Activated CD4-positive, alpha-beta T cell treated with anti-CD3 and anti-CD28 coated beads for 36 hours (primary cell): ENCODE measurements at regions of chr14 and their contacts with region 1.

Region 1: DNA sequence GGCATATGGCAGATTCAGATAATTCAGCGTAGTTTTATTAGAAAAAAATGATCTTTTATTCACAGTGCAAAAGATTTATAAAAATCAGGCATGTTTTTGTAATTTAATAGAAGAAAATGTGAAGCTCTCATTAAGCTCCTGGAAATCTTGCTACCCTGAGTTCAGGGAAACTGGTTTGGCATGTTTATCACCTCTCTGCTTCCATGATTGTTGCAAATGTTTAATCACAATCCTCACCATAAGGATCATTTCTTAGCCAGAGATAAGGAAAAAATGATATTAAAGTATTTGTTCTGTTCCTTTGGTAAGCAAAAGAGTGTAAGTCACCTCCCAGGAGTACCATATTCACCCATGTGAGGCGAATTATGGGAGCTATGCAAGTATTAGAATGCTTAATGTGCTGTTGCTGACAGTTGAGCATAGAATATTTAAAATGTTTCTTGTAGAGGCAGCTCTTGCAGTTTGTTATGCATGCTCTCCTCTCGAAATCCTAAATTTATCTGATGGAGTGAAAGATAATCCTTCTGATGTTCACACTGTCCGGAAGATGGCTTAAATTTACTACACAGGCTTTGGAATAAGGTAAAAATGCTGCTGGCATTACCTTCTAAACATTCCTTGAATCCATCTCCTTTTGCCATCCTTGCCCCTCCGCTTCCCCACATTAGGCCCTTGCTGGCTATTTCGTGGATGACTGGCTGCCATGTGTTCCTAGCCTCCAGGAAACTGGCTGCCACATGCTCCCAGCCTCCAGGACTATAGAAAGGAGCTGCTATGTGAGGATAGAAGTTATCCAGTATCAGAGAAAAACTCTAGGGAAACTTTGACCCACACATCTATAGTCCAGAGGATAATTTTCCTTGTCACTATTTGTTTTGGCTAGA is 115.8 kb upstream of the CCDC198 start:
- DNase-seq: no peak
- ATAC-seq: no peak
- H3K4me3 Mint-ChIP-seq: no peak overlapping the region
- H3K27ac Mint-ChIP-seq: no peak overlapping the region
- H3K4me1 Mint-ChIP-seq: no peaks in the 10 kb centered on the region
- H3K27me3 Mint-ChIP-seq: peaks cover 3% of the 10 kb centered on the region

Region 2: GRCh38 chr14:57502586-57503254 is 106.7 kb before region 1 on chr14:
- CTCF ChIA-PET with region 1: no interaction called
- POLR2A ChIA-PET with region 1: interaction called, 10 read pairs
- intact Hi-C with region 1: no loop called
- DNase-seq: no peak
- ATAC-seq: no peak
- H3K4me3 Mint-ChIP-seq: no peak overlapping the region
- H3K27ac Mint-ChIP-seq: no peak overlapping the region
- H3K4me1 Mint-ChIP-seq: no peaks in the 10 kb centered on the region
- H3K27me3 Mint-ChIP-seq: no peaks in the 10 kb centered on the region

Region 3: DNA sequence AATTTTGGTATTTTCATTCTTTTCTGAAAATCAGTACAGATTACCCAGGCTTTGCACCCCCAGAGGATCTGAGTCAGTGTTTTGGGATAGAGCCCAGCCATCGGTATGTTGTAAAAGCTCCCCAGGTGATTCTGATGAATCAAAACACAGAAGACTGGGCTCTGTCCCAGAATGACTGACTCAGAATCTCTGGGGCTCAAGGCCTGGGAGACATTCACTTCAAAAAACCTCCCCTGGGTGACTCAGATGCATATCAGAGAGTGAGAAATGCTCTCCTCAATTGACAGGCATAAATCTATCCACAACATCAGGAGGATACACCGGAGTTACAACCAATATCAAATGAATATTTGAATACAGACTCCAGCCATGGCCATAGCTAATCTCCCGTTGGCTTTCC is 223.9 kb after region 1 on chr14:
- CTCF ChIA-PET with region 1: no interaction called
- POLR2A ChIA-PET with region 1: no interaction called
- intact Hi-C with region 1: no loop called
- DNase-seq: no peak
- ATAC-seq: peak; percentile 49
- H3K4me3 Mint-ChIP-seq: no peak overlapping the region
- H3K27ac Mint-ChIP-seq: no peak overlapping the region
- H3K4me1 Mint-ChIP-seq: no peaks in the 10 kb centered on the region
- H3K27me3 Mint-ChIP-seq: peaks cover 5% of the 10 kb centered on the region